ENCODE measurements at regions of chr2 and their contacts with region 1.

Region 1: DNA sequence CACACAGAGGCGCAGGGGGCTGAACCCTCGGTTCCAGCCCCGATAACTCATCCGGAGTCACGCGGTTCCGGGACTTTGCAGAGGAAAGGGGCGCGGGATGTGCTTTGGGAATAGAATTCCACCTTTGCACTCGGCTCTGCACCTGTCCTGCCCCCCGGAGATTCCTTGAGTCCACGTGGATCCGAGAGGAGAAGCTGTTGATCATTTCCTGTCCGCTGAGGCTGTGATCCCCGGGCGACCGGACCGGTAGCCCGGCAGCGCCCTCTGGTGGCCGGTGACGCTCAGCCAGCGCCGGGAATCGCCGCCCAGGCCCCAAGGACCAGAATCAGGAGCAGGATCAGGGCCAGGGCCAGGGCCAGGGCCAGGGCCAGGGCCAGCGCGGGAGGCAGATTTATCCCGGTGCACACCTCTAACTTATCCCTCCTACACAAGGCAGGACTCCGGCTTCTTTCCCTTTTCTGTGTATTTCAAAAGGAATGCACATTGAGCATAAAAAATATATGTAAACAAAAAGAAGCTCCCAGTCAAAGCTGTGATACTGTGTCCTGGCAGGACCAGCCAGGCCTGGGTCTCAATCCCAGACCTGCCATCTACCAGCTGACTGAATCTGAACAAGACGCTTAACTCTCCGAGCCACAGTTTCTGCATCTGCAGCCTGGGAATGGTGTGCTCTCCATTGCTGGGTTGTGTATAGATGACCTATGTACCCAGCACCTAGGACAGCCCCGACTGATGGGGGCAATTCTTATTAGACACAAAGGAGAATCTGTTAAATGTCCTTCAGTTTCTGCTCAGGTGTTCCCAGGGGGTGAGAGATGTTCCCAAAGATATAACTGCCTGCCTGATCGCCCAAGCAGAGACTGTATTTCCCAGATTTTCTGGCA is 8.5 kb upstream of the SPATA3 start:
- DNase-seq: peak; percentile 89
- ATAC-seq: peak; percentile 93

Region 2: DNA sequence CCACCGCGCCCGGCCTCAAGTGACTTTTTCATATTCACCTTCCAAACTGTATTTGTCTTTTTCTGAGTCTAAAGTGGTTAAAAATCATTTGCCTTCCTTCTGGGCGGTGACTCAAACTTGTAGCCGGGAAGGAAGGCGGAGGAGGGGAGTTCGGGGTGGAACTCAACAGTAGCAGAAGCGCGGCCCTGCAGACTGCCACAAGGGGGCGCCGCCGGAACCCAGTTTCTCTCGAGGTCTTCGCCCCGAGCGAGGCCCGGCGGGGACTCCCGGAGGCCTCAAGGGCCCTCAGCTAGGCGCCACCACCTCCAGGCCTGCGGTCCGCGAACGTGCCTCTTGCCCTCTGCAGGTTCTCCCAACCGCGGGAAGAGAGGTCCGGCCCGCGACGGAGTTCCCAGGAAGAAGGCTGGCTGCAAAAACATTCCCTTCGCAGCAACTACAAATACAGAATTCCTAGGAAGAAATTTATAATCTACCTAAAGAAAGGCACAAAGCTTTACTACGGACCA is 139.4 kb before region 1 on chr2:
- intact Hi-C with region 1: loop called (anchors 10 kb)
- DNase-seq: peak; percentile 92
- ATAC-seq: peak; percentile 89

Region 3: DNA sequence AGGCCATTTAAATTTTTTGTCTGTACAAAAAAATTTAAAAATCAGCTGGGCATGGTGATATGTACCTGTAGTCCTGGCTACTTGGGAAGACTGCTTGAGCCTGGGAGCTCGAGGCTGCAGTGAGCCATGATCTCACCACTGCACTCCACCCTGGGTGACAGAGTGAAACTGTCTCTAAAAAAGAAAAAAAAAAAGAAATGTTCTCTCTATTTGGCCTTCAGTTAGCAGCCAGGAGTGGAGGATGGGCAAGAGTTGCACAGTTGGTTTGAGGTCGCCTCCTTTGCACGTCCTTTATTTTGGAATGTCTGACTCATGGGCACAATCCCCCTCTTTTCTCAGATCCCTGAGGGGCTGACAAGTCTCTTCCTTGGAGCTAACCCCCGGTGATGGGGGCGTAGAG is 96.3 kb before region 1 on chr2:
- intact Hi-C with region 1: no loop called
- DNase-seq: peak; percentile 7
- ATAC-seq: no peak

Region 4: GRCh38 chr2:230902180-230902899 is 85.0 kb before region 1 on chr2:
- intact Hi-C with region 1: loop called (anchors 5 kb)
- DNase-seq: peak; percentile 50
- ATAC-seq: peak; percentile 73

Measured in left ventricle myocardium superior (tissue), 1 donor.